Left colon (tissue), 2 donors: ENCODE measurements at regions of chr9 and their contacts with region 1.

Region 1: GRCh38 chr9:122350638-122351355 is 20.0 kb upstream of the PTGS1 start:
- DNase-seq: peak; percentile 62 to 83
- ATAC-seq: peak; percentile 66

Region 2: GRCh38 chr9:122125158-122125508 is 225.7 kb before region 1 on chr9:
- intact Hi-C with region 1: loop called (anchors 2 to 10 kb)
- DNase-seq: peak; percentile 58 to 80
- ATAC-seq: peak; percentile 90

Region 3: GRCh38 chr9:122213589-122214413 is 137.0 kb before region 1 on chr9:
- intact Hi-C with region 1: no loop called
- DNase-seq: peak; percentile 39 to 68
- ATAC-seq: peak; percentile 90

Region 4: DNA sequence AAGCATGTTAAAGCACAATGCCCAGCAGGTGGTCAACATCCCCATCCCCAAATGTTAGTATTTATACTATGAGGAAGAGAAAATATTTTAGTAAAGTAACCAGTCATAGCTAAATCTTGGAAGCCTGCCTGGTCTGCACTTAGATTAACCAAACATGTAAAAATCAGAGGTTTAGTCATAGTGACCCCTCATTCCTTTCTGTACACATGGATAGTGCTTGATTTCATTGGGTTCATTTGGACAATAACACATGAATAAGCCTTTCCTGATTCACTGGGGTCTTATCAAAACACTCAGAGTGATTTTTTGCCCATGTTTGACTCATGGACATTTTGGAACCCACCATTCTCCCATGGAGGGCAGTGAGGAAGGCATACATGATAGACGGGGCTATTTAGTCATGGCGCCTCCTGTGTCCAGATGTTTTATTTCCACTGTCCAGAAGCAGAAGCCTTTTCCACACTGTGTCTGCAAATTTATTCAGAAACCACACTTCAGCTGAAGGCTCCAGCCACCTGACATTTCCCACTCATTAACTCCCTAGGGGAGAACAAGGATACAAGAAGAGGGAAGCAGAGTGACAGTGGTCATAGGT is 94.5 kb after region 1 on chr9:
- intact Hi-C with region 1: no loop called
- DNase-seq: no peak
- ATAC-seq: no peak